Cardiac septum (tissue), 1 donor: ENCODE measurements at regions of chr12 and their contacts with region 1.

Region 1: DNA sequence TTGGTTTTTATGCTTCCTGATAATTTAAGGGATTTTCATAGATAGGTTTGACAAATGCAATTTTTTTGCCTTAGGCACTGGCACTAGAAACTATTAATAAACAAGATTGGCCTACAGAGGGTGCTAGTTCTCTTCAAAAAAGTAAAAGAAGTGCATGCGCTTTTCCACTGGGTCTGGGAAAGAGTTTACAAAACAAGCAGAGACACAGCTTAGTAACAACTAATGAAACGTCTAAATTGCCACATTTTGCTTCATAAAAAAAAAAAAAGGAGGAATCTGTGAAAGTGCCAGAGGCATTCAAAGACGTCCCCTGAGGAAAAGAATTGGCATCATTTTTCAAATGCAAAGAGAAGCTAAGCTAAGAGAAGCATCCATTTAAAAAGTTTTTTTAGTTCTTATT is 58.3 kb upstream of the EEA1 start:
- DNase-seq: no peak

Region 2: DNA sequence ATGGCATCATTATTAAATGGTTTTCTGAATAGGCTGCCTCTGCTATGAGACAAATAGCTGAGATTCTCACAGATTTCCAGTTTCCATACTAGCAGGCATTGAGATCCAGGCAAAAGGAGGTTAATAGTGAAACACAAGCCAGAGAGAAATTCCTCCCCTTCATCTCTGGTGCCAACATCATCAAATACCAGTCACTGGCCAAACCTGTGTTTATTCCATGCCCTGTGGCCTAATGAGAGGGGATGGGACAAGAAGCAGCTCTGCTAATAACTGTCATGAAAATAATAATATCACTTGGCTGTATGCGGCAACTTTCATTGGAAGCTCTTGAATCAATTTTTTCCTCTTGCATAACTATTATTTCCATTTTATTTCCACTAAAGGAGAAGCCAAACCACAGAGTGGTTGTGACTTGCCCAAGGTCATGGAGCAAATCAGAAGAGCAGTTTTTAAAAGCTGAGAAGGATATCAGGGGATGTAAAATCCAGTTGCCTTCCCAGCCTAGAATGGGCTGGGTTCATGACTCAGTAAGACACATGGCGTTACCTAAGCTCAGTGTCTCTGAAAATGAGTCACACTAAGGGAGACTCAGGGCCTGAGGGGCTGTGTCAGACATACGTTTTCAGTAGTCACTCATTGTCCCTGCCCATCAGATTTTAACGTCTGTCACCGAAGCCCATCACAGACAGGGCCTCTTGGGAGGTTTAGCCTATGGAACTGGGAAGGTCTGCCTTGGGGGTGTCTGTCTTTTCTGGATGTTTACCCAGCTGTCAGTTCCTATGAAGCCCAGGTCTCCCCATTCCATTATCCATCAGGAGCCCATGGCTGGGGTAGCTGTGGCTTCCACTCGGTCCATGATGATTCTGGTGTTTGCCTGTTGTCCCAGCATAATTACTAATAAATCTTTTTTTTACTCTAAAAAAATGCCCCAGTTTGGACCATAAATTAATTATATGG is 150.6 kb after region 1 on chr12:
- intact Hi-C with region 1: loop called (anchors 5 kb)
- DNase-seq: no peak

Region 3: DNA sequence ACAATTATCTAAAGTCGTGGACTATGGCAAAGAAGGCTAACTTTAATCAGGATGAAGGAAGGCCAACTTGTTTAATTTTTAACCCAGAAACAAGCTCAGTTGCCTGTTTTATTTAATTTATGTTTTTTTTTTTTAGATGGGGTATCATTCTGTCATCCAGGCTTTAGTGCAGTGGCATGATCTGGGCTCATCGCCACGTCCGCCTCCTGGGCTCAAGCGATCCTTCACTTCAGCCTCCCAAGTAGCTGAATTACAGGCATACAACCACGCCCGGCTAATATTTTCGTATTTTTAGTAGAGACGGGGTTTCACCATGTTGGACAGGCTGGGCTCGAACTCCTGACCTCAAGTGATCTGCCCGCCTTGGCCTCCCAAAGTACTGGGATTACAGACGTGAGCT is 410.1 kb after region 1 on chr12:
- intact Hi-C with region 1: loop called (anchors 5 kb)
- DNase-seq: no peak

Region 4: GRCh38 chr12:93419388-93420034 is 432.1 kb after region 1 on chr12:
- intact Hi-C with region 1: loop called (anchors 5 kb)
- DNase-seq: no peak